ENCODE measurements at regions of chr6 and their contacts with region 1.

Region 1: GRCh38 chr6:46626228-46626909 is 26.2 kb downstream of the CYP39A1 start:
- DNase-seq: peak; percentile 27
- CTCF ChIP-seq: peak; percentile 40

Region 2: GRCh38 chr6:46062306-46062706 is 564.1 kb before region 1 on chr6:
- in situ Hi-C with region 1: loop called (anchors 25 kb)
- DNase-seq: no peak
- CTCF ChIP-seq: no peak

Region 3: DNA sequence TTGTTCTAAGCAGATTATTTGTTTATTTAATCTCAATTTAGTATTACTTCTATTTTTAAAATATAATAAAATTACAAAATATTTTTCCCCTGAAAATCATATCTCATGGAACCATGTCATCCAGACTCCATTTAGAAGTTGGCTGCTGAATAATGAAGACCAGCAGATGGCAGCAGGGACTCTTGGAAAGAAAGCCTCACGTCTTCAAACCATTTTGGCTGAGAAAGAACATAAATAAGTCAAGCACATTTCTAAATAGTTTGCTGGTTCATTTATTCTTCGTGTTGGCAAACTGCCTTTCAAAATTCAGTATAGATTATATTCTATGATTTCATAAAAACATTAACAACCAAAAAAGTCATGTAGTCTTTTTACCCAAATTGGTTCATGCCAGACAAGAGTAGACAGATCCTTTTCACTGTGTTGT is 206.8 kb before region 1 on chr6:
- in situ Hi-C with region 1: loop called (anchors 5 kb)
- DNase-seq: peak; percentile 36
- CTCF ChIP-seq: peak; percentile 55

Measured in GM13976 (cell line).